Activated naive CD4-positive, alpha-beta T cell treated with anti-CD3 and anti-CD28 coated beads, Interleukin-2, amount 10 ng/mL, durations not matched to agents 7 days and 5 days (primary cell): ENCODE measurements at regions of chr3 and their contacts with region 1.

Region 1: GRCh38 chr3:189270248-189270832 is 98.6 kb downstream of the TPRG1 start:
- DNase-seq: peak; percentile 65
- H3K4me3 Mint-ChIP-seq: no peak overlapping the region
- H3K27ac Mint-ChIP-seq: no peak overlapping the region
- H3K4me1 Mint-ChIP-seq: peaks cover 13% of the 10 kb centered on the region
- H3K27me3 Mint-ChIP-seq: no peaks in the 10 kb centered on the region

Region 2: GRCh38 chr3:189324538-189325138 is 54.3 kb after region 1 on chr3:
- CTCF ChIA-PET with region 1: interaction called, 10 read pairs
- DNase-seq: peak; percentile 93
- H3K4me3 Mint-ChIP-seq: peak overlapping the region; percentile 72
- H3K27ac Mint-ChIP-seq: peak overlapping the region; percentile 99
- H3K4me1 Mint-ChIP-seq: peaks cover 66% of the 10 kb centered on the region
- H3K27me3 Mint-ChIP-seq: no peaks in the 10 kb centered on the region

Region 3: DNA sequence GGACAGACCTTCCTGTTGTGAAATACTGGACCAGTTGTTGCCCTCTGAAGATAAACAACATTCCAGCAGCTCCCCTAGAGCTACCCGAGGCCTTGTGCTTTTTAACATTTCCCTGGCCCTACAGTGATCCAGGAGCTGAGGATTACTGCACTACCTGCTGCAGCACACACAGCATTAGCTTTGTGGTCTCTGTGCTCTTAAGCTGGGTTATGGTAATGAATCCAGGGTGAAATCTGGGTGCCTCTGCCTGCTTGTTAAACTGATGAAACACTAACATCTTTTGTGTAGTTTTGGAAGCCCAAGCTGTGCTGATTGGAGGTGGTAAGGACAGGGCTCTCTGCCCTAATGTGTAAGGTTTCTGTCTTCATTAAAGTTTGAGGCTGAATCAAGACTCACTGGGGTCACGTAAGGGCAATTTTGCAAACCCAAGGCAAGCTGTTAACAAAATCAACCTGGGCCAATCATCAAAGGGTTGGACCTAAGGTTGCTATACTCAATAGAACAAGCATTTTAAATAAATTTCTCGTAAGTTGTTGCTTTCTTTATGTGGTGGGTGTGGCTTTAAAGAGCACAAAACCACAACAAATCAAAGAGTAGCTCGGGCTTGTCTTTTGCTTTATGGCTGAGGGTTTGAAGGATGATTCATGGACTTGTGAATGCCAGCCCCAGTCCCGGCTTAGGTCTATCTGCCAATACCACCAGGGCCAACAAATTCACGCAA is 85.3 kb after region 1 on chr3:
- CTCF ChIA-PET with region 1: interaction called, 11 read pairs
- DNase-seq: peak; percentile 59
- H3K4me3 Mint-ChIP-seq: peak overlapping the region; percentile 27
- H3K27ac Mint-ChIP-seq: peak overlapping the region; percentile 98
- H3K4me1 Mint-ChIP-seq: peaks cover 33% of the 10 kb centered on the region
- H3K27me3 Mint-ChIP-seq: no peaks in the 10 kb centered on the region

Region 4: DNA sequence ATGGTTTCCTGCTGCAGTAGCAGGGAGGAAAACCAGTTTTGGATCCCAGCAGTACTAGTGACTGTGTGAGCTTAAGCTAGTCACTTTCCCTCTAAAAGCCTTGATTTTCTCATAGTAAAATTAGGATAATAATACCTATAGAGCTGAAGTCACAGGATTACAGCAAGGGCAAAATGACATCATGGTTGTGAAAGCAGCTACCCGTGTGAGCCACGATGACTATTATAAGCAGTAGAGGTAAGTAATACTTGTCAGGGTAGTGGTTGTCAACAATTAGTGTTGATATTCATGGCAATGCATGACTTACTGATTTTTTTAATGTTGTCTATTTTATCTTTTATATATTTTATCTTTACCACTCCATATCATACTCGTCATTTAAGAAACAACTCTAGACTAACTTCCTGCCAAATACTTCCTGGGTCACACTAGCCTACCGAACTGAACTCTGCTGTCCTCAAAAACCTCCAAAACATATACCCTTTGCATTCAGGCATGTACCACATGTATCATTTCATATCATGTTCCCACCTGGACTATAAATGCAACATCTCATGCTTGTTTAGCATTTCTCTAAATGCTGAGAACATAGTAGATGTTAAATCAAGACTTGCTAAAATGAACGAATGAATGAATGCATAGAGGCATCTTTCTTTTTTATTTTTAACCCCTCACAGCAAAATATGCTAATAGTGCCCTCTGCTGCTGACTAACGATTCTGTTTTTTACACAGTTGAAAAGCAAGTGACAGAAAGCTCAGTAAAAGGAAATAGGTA is 677.8 kb after region 1 on chr3:
- CTCF ChIA-PET with region 1: interaction called, 107 read pairs
- DNase-seq: no peak
- H3K4me3 Mint-ChIP-seq: no peak overlapping the region
- H3K27ac Mint-ChIP-seq: no peak overlapping the region
- H3K4me1 Mint-ChIP-seq: peaks cover 4% of the 10 kb centered on the region
- H3K27me3 Mint-ChIP-seq: peaks cover 6% of the 10 kb centered on the region